ENCODE measurements at regions of chr15 and their contacts with region 1.

Region 1: DNA sequence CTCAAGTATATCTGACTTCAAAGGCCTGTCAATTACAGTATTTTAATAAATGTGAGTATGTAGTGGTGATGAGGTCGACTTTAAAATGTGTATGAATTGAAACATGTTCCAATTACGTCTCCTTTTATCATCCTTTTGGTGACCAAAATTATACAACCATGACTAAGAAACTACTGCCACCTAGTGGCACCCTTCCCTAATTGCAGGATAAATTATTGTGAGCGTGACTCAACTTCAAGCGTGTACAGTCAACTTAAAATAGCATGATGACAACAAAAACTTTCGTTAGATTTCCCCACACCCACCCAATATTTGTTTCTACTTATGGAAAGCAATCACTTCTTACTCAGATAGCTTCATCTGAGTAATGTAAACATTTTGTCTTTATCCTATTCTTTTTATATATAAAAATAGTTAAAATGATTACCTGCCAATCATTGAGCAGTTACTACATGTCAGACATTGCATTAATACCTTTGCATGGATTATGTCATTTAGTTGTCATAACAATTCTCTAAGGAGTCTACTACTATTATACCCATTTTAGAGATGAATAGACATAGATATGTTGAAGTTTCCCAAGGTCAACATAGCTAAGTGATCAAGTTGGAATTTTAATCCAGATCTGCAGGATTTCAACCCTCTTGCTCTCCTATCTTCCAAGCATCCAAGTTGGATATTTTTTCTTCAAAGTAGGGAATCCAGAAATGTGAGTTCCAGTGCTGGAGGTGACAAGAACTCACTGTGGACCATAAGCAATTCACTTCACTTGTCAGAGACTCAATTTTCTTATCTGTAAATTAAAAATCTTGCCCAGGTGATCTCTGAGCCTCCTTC is 106.0 kb downstream of the MEX3B start:
- DNase-seq: no peak
- H3K4me3 ChIP-seq: no peak overlapping the region
- H3K27ac ChIP-seq: no peak overlapping the region
- H3K4me1 ChIP-seq: no peaks in the 10 kb centered on the region
- H3K27me3 ChIP-seq: no peaks in the 10 kb centered on the region
- CTCF ChIP-seq: peak in 2 of 3 donors; percentile 20 to 29
- POLR2A ChIP-seq: no peak

Region 2: GRCh38 chr15:82003916-82004315 is 64.1 kb after region 1 on chr15:
- intact Hi-C with region 1: loop called (anchors 10 kb)
- DNase-seq: no peak
- H3K4me3 ChIP-seq: no peak overlapping the region
- H3K27ac ChIP-seq: no peak overlapping the region
- H3K4me1 ChIP-seq: no peaks in the 10 kb centered on the region
- H3K27me3 ChIP-seq: no peaks in the 10 kb centered on the region
- CTCF ChIP-seq: no peak
- POLR2A ChIP-seq: no peak

Region 3: GRCh38 chr15:82040862-82041261 is 101.0 kb after region 1 on chr15:
- intact Hi-C with region 1: no loop called
- DNase-seq: no peak
- H3K4me3 ChIP-seq: no peak overlapping the region
- H3K27ac ChIP-seq: no peak overlapping the region
- H3K4me1 ChIP-seq: no peaks in the 10 kb centered on the region
- H3K27me3 ChIP-seq: no peaks in the 10 kb centered on the region
- CTCF ChIP-seq: no peak
- POLR2A ChIP-seq: no peak